ENCODE measurements at regions of chr5 and their contacts with region 1.

Region 1: DNA sequence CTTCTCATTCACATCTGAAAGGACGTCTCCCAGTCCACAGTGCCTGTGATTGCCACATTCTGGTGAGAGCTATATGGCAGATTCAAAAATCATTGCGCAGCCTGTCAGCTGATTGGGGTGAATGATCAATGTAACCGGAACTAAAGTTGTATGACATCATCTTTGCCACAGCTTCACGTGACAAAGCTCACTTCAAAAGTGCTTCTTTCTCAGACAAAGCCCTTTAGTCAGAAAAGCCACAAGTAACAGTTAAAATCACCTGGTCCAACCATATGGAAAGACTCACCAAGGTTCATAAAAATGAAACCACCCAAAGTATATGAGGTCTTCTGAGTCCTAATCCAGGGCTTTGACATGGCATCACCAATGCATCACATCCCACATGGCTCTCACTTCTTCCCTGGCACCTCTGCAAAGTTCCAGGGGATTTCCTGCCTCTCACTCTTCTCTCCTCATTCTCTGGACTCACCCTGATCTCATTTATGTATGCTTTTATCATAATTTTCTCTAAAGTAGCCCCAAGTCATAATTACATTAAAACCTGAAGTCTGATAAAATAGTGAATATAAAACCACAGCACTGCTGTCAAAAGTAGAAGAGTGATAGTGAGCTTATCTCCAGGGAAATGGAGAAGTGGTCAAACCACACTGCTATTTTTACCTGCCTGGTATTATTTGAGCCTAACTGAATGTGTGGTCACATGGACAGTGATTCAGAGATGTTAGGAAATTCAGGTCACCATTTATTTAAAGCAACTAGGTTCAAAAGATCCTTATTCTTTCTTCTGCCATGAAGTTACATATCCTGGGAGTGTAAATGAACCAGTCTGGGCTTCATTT is 193.1 kb upstream of the PTGER4 start:
- DNase-seq: peak; percentile 86
- ATAC-seq: peak; percentile 42
- H3K4me3 ChIP-seq: peak overlapping the region in 1 of 5 experiments; percentile 4
- H3K4me3 Mint-ChIP-seq: peak overlapping the region; percentile 79
- H3K27ac ChIP-seq: peak overlapping the region; percentile 42 to 75
- H3K27ac Mint-ChIP-seq: peak overlapping the region; percentile 73
- H3K4me1 ChIP-seq: peaks cover 46 to 58% of the 10 kb centered on the region in 2 donors
- H3K4me1 Mint-ChIP-seq: peaks cover 65% of the 10 kb centered on the region
- H3K27me3 ChIP-seq: no peaks in the 10 kb centered on the region
- H3K27me3 Mint-ChIP-seq: no peaks in the 10 kb centered on the region
- CTCF ChIP-seq: no peak

Region 2: GRCh38 chr5:40172721-40173120 is 313.9 kb before region 1 on chr5:
- CTCF ChIA-PET with region 1: no interaction called
- POLR2A ChIA-PET with region 1: no interaction called
- intact Hi-C with region 1: no loop called
- DNase-seq: no peak
- ATAC-seq: no peak
- H3K4me3 ChIP-seq: no peak overlapping the region
- H3K4me3 Mint-ChIP-seq: no peak overlapping the region
- H3K27ac ChIP-seq: no peak overlapping the region
- H3K27ac Mint-ChIP-seq: no peak overlapping the region
- H3K4me1 ChIP-seq: no peaks in the 10 kb centered on the region
- H3K4me1 Mint-ChIP-seq: no peaks in the 10 kb centered on the region
- H3K27me3 ChIP-seq: no peaks in the 10 kb centered on the region
- H3K27me3 Mint-ChIP-seq: no peaks in the 10 kb centered on the region
- CTCF ChIP-seq: no peak

Region 3: GRCh38 chr5:40386289-40386688 is 100.4 kb before region 1 on chr5:
- CTCF ChIA-PET with region 1: no interaction called
- POLR2A ChIA-PET with region 1: no interaction called
- intact Hi-C with region 1: loop called (anchors 5 kb)
- DNase-seq: peak; percentile 52
- ATAC-seq: peak; percentile 57
- H3K4me3 ChIP-seq: no peak overlapping the region
- H3K4me3 Mint-ChIP-seq: no peak overlapping the region
- H3K27ac ChIP-seq: no peak overlapping the region
- H3K27ac Mint-ChIP-seq: no peak overlapping the region
- H3K4me1 ChIP-seq: peaks cover 36 to 43% of the 10 kb centered on the region in 2 donors
- H3K4me1 Mint-ChIP-seq: peaks cover 45% of the 10 kb centered on the region
- H3K27me3 ChIP-seq: no peaks in the 10 kb centered on the region
- H3K27me3 Mint-ChIP-seq: no peaks in the 10 kb centered on the region
- CTCF ChIP-seq: no peak

Region 4: GRCh38 chr5:40404613-40405012 is 82.0 kb before region 1 on chr5:
- CTCF ChIA-PET with region 1: no interaction called
- POLR2A ChIA-PET with region 1: no interaction called
- intact Hi-C with region 1: loop called (anchors 5 kb)
- DNase-seq: peak; percentile 49
- ATAC-seq: peak; percentile 52
- H3K4me3 ChIP-seq: no peak overlapping the region
- H3K4me3 Mint-ChIP-seq: peak overlapping the region; percentile 20
- H3K27ac ChIP-seq: no peak overlapping the region
- H3K27ac Mint-ChIP-seq: peak overlapping the region; percentile 46
- H3K4me1 ChIP-seq: peaks cover 37% of the 10 kb centered on the region in 2 donors
- H3K4me1 Mint-ChIP-seq: peaks cover 47% of the 10 kb centered on the region
- H3K27me3 ChIP-seq: no peaks in the 10 kb centered on the region
- H3K27me3 Mint-ChIP-seq: no peaks in the 10 kb centered on the region
- CTCF ChIP-seq: no peak

Region 5: DNA sequence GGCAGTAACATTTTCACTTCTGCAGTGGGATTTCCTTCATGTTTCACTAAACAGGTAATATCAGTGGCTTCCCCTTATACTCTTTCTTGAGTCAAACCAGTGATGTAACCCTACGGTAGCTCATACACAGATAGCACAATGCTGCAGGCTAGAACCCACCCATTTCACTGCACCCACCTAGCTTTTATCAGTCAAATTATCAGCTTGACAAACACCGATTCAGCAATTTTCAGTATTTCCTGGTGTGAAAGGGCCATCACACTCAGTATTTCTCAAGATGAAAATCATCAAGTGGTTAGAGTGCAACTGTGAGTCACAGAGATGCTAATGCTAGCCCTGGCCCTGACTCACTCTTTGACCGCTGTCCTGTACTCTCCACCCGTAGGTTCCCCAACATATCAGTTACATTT is 49.2 kb before region 1 on chr5:
- CTCF ChIA-PET with region 1: no interaction called
- POLR2A ChIA-PET with region 1: no interaction called
- intact Hi-C with region 1: loop called (anchors 5 kb)
- DNase-seq: peak; percentile 41
- ATAC-seq: peak; percentile 66
- H3K4me3 ChIP-seq: no peak overlapping the region
- H3K4me3 Mint-ChIP-seq: peak overlapping the region; percentile 46
- H3K27ac ChIP-seq: no peak overlapping the region
- H3K27ac Mint-ChIP-seq: peak overlapping the region; percentile 21
- H3K4me1 ChIP-seq: peaks cover 28 to 35% of the 10 kb centered on the region in 2 donors
- H3K4me1 Mint-ChIP-seq: peaks cover 40% of the 10 kb centered on the region
- H3K27me3 ChIP-seq: no peaks in the 10 kb centered on the region
- H3K27me3 Mint-ChIP-seq: no peaks in the 10 kb centered on the region
- CTCF ChIP-seq: no peak

Region 6: GRCh38 chr5:40502736-40503135 is 16.1 kb after region 1 on chr5:
- CTCF ChIA-PET with region 1: no interaction called
- POLR2A ChIA-PET with region 1: no interaction called
- intact Hi-C with region 1: loop called (anchors 2 kb)
- DNase-seq: peak; percentile 67
- ATAC-seq: peak; percentile 68
- H3K4me3 ChIP-seq: peak overlapping the region in 3 of 5 experiments; percentile 12 to 51 (median 30)
- H3K4me3 Mint-ChIP-seq: no peak overlapping the region
- H3K27ac ChIP-seq: peak overlapping the region in 1 of 2 donors; percentile 60
- H3K27ac Mint-ChIP-seq: no peak overlapping the region
- H3K4me1 ChIP-seq: peaks cover 14 to 17% of the 10 kb centered on the region in 2 donors
- H3K4me1 Mint-ChIP-seq: peaks cover 6% of the 10 kb centered on the region
- H3K27me3 ChIP-seq: no peaks in the 10 kb centered on the region
- H3K27me3 Mint-ChIP-seq: no peaks in the 10 kb centered on the region
- CTCF ChIP-seq: no peak

Region 7: DNA sequence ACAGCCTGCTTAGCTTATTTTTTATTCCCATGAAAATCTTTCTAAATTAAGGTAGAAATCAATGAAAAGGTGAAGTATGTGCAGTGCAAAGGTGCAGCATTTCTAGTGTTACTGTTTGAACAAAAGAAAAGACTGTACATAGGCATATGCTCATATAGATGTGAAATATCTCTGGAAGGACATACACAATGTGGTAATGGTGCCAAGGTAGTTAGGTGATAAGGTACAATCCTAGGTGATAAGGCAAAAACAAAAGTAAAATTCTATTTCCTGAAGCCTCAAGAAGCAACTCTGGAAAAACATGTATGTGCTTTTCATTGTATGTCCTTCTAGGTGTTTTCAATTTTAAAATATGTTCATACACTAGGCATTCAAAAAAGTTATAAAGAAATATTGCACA is 53.6 kb after region 1 on chr5:
- CTCF ChIA-PET with region 1: no interaction called
- POLR2A ChIA-PET with region 1: no interaction called
- intact Hi-C with region 1: no loop called
- DNase-seq: no peak
- ATAC-seq: no peak
- H3K4me3 ChIP-seq: no peak overlapping the region
- H3K4me3 Mint-ChIP-seq: no peak overlapping the region
- H3K27ac ChIP-seq: no peak overlapping the region
- H3K27ac Mint-ChIP-seq: no peak overlapping the region
- H3K4me1 ChIP-seq: no peaks in the 10 kb centered on the region
- H3K4me1 Mint-ChIP-seq: no peaks in the 10 kb centered on the region
- H3K27me3 ChIP-seq: no peaks in the 10 kb centered on the region
- H3K27me3 Mint-ChIP-seq: no peaks in the 10 kb centered on the region
- CTCF ChIP-seq: no peak

Region 8: DNA sequence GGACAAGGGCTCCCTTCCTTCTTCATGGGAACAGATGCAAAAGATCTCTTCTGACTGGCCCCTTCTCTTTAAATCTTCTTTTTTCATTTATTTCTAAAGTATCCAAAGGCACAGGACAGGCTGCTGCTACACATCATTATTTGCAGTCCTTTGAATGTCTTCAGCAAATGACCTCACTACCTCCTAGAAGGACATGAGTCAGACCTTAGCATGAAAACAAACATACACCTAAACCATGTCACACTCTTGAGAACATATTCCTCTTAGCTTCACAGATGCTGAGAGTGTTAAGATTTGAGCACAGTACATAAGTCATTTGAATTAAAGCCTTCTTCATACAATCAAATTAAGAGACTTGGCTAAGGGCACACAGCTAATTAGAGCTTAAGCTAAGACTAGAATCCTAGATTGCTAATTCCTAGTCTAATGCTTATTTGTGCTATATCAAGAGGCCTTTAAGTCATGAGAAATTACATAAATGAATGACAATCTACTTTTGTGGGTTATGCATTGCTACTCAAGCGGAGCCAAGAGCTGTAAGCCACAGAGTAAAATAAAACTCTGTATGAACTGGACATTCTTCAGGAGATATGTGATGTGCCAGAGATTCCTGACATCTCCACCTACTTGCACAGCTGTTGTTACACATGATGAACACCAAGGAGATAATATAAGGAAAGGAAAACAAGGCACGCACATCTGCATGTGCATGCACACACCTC is 83.9 kb after region 1 on chr5:
- CTCF ChIA-PET with region 1: no interaction called
- POLR2A ChIA-PET with region 1: no interaction called
- intact Hi-C with region 1: loop called (anchors 5 kb)
- DNase-seq: peak; percentile 53
- ATAC-seq: peak; percentile 75
- H3K4me3 ChIP-seq: no peak overlapping the region
- H3K4me3 Mint-ChIP-seq: peak overlapping the region; percentile 66
- H3K27ac ChIP-seq: no peak overlapping the region
- H3K27ac Mint-ChIP-seq: peak overlapping the region; percentile 76
- H3K4me1 ChIP-seq: peaks cover 34 to 38% of the 10 kb centered on the region in 2 donors
- H3K4me1 Mint-ChIP-seq: peaks cover 35% of the 10 kb centered on the region
- H3K27me3 ChIP-seq: no peaks in the 10 kb centered on the region
- H3K27me3 Mint-ChIP-seq: peaks cover 4% of the 10 kb centered on the region
- CTCF ChIP-seq: no peak

Region 9: DNA sequence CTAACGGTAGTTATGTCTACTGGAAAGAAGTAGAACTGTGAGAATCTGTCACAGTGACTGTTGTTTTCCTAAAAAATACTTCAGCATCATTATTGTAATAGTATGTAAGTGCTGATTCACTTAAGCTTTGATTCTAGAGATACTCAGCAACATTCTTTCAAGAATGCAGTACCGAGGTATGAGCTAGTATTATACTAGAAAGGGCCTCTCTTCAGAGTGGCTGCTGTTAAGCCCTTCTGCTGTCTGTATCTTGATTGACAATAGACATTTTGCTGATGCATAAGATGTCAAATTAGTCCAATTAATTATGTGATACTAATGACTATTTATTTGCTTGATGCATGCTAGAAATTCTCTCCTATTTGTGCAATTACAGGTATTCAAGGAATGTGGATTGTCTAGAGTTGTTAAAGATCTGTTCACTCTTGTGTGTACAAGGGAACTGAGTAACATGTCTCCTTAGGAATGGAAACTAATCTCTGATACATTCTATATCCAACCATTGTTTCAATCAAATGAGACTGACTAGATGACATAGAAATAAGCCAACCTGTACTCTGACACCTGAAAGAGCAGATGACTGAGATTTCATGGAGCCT is 100.7 kb after region 1 on chr5:
- CTCF ChIA-PET with region 1: no interaction called
- POLR2A ChIA-PET with region 1: no interaction called
- intact Hi-C with region 1: loop called (anchors 5 kb)
- DNase-seq: no peak
- ATAC-seq: no peak
- H3K4me3 ChIP-seq: no peak overlapping the region
- H3K4me3 Mint-ChIP-seq: no peak overlapping the region
- H3K27ac ChIP-seq: no peak overlapping the region
- H3K27ac Mint-ChIP-seq: no peak overlapping the region
- H3K4me1 ChIP-seq: peaks cover 17 to 24% of the 10 kb centered on the region in 2 donors
- H3K4me1 Mint-ChIP-seq: peaks cover 28% of the 10 kb centered on the region
- H3K27me3 ChIP-seq: no peaks in the 10 kb centered on the region
- H3K27me3 Mint-ChIP-seq: no peaks in the 10 kb centered on the region
- CTCF ChIP-seq: no peak